ENCODE measurements at regions of chr14 and their contacts with region 1.

Region 1: GRCh38 chr14:52351233-52352060 is 37.3 kb downstream of the PTGER2 start:
- DNase-seq: no peak
- H3K4me3 ChIP-seq: peak overlapping the region; percentile 18 to 33
- H3K4me3 Mint-ChIP-seq: peak overlapping the region; percentile 83 to 90 (median 88)
- H3K27ac ChIP-seq: peak overlapping the region; percentile 27
- H3K27ac Mint-ChIP-seq: peak overlapping the region; percentile 90 to 95 (median 93)
- H3K4me1 ChIP-seq: peaks cover 75% of the 10 kb centered on the region
- H3K4me1 Mint-ChIP-seq: peaks cover 56 to 83% (median 68%) of the 10 kb centered on the region in 4 donors
- H3K27me3 ChIP-seq: no peaks in the 10 kb centered on the region
- H3K27me3 Mint-ChIP-seq: peaks cover 0 to 3% of the 10 kb centered on the region in 2 donors

Region 2: GRCh38 chr14:52325126-52325525 is 26.3 kb before region 1 on chr14:
- CTCF ChIA-PET with region 1: interaction called, 3 read pairs
- POLR2A ChIA-PET with region 1: interaction called, 6 read pairs
- intact Hi-C with region 1: loop called (anchors 1 kb)
- DNase-seq: peak in 1 of 5 donors; percentile 53
- H3K4me3 ChIP-seq: no peak overlapping the region
- H3K4me3 Mint-ChIP-seq: peak overlapping the region in 7 of 8 donors; percentile 21 to 82 (median 59)
- H3K27ac ChIP-seq: no peak overlapping the region
- H3K27ac Mint-ChIP-seq: peak overlapping the region; percentile 0 to 89 (median 65)
- H3K4me1 ChIP-seq: peaks cover 87% of the 10 kb centered on the region
- H3K4me1 Mint-ChIP-seq: peaks cover 55 to 94% (median 74%) of the 10 kb centered on the region in 4 donors
- H3K27me3 ChIP-seq: no peaks in the 10 kb centered on the region
- H3K27me3 Mint-ChIP-seq: no peaks in the 10 kb centered on the region

Region 3: DNA sequence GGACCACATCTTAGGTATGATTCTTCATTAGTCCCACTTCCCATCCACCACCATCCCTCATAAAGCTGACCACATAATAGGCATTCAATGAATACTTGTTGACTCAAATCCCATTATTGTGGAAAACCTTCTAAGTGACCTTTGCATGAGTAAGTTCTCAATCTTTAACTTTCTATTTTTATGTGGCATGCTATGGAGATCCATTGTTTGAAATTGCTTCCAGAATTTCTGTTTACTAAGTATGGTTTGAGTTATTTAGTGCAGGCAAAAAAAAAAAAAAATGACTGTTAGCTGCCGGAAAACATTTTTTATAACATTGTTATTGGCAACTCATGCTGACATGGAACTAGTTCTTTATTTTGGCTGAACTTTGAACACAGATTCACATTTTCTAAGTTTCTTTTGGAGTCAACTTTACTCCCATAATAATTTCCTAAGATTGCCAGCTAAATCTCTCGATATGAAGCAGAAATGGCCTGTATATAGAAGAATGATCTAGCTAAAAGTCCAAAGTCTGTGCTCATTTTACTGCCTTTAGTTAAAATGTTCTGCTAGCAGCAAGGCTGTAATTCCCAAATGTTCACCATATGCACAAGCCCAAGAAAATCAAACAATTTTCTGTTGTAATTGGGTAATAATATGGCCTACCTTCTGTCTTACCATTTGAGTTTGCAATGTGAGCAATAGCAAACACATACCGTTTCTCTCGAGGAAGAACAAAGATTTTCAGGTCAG is 40.6 kb after region 1 on chr14:
- CTCF ChIA-PET with region 1: no interaction called
- POLR2A ChIA-PET with region 1: no interaction called
- intact Hi-C with region 1: no loop called
- DNase-seq: no peak
- H3K4me3 ChIP-seq: no peak overlapping the region
- H3K4me3 Mint-ChIP-seq: no peak overlapping the region
- H3K27ac ChIP-seq: no peak overlapping the region
- H3K27ac Mint-ChIP-seq: peak overlapping the region in 1 of 7 donors; percentile 48
- H3K4me1 ChIP-seq: peaks cover 6% of the 10 kb centered on the region
- H3K4me1 Mint-ChIP-seq: peaks cover 10 to 24% (median 13%) of the 10 kb centered on the region in 4 donors
- H3K27me3 ChIP-seq: no peaks in the 10 kb centered on the region
- H3K27me3 Mint-ChIP-seq: peaks cover 0 to 1% of the 10 kb centered on the region in 2 donors

Region 4: DNA sequence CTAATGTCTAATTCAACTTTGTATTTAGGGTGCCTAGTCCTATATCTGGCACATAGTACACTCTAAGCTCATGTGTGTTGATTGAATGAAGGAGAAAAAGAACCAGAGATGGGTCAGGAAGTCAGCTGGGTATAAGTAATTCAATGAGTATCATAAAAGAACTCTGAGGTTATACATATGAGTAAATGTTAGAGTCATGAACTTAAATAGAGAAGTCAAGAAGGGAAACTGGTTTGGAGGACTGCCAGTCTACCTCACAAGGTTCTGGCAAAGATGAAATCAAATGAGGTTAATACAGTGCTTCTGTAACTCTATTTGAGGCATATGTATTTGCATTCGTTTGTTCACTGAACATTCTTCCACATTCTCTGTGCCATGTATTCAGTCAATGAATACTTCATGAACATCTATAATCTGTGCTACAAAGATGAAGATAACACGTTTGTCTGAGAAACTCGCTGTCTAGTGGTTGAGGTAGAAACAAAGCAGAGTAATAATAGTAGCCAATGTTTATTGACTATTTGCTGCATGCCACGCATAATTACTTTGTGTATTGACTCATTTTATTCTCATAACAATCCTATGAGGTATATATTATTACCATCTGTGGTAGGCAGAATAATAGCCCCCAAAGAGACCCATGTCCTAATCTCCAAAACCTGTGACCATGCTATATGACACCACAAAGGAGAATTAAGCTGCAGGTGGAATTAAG is 51.5 kb after region 1 on chr14:
- CTCF ChIA-PET with region 1: interaction called, 4 read pairs
- POLR2A ChIA-PET with region 1: interaction called, 3 read pairs
- intact Hi-C with region 1: loop called (anchors 5 kb)
- DNase-seq: peak in 4 of 5 donors; percentile 43 to 54 (median 50)
- H3K4me3 ChIP-seq: peak overlapping the region in 1 of 2 donors; percentile 9
- H3K4me3 Mint-ChIP-seq: peak overlapping the region in 6 of 8 donors; percentile 18 to 70 (median 50)
- H3K27ac ChIP-seq: no peak overlapping the region
- H3K27ac Mint-ChIP-seq: peak overlapping the region in 6 of 7 donors; percentile 5 to 33 (median 19)
- H3K4me1 ChIP-seq: peaks cover 67% of the 10 kb centered on the region
- H3K4me1 Mint-ChIP-seq: peaks cover 53 to 73% (median 63%) of the 10 kb centered on the region in 4 donors
- H3K27me3 ChIP-seq: no peaks in the 10 kb centered on the region
- H3K27me3 Mint-ChIP-seq: no peaks in the 10 kb centered on the region

Measured in CD4-positive, alpha-beta memory T cell (primary cell).